ENCODE measurements at regions of chr22 and their contacts with region 1.

Region 1: GRCh38 chr22:27911330-27911729 is 7.7 kb downstream of the PITPNB start:
- DNase-seq: no peak
- ATAC-seq: no peak
- H3K4me3 ChIP-seq: no peak overlapping the region
- H3K27ac ChIP-seq: peak overlapping the region in 2 of 10 donors; percentile 56 to 67
- H3K4me1 ChIP-seq: peaks cover 6 to 62% (median 52%) of the 10 kb centered on the region in 9 donors
- H3K27me3 ChIP-seq: no peaks in the 10 kb centered on the region
- CTCF ChIP-seq: no peak

Region 2: GRCh38 chr22:27896245-27896644 is 15.1 kb before region 1 on chr22:
- intact Hi-C with region 1: loop called in 1 of 10 experiments (anchors 2 kb)
- DNase-seq: peak in 1 of 2 donors; percentile 30
- ATAC-seq: peak in 2 of 8 donors; percentile 36 to 62
- H3K4me3 ChIP-seq: no peak overlapping the region
- H3K27ac ChIP-seq: peak overlapping the region in 2 of 10 donors; percentile 8 to 14
- H3K4me1 ChIP-seq: peaks cover 0 to 42% (median 10%) of the 10 kb centered on the region in 9 donors
- H3K27me3 ChIP-seq: no peaks in the 10 kb centered on the region
- CTCF ChIP-seq: no peak

Region 3: GRCh38 chr22:28002181-28002700 is 90.9 kb after region 1 on chr22:
- intact Hi-C with region 1: no loop called
- DNase-seq: no peak
- ATAC-seq: no peak
- H3K4me3 ChIP-seq: no peak overlapping the region
- H3K27ac ChIP-seq: no peak overlapping the region
- H3K4me1 ChIP-seq: peaks cover 0 to 21% (median 12%) of the 10 kb centered on the region in 9 donors
- H3K27me3 ChIP-seq: no peaks in the 10 kb centered on the region
- CTCF ChIP-seq: no peak

Region 4: DNA sequence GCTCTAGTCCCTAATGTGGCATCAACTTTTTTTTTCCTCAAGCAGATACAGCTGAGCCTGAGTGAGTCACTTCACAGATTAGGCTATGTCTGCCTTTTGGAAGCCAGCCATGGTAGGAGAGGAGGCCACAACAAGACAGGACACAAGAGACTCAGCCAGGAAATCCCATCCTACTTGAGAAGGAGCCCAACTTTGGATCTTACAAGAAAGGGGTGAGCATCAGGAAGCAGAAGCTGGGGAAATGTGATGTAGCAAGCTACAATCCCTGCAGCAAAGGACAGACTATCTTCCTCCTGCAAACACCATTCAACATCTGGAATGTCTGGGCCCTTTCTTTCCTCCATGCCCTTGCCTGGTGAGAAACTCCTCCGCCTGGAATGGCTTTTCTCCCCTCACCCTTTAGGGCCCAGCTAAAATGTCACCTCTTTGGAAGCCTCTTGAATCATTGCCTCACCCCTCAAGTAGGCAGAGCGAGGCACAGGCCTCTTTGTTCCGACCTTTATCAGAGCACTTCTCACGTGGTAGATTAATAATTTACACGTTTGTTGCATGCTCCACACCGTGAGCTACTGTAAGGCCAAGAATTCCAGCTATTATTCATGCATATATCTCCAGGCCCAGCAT is 164.1 kb after region 1 on chr22:
- intact Hi-C with region 1: no loop called
- DNase-seq: peak in 1 of 2 donors; percentile 75
- ATAC-seq: peak; percentile 80 to 90 (median 84)
- H3K4me3 ChIP-seq: no peak overlapping the region
- H3K27ac ChIP-seq: peak overlapping the region; percentile 45 to 84 (median 72)
- H3K4me1 ChIP-seq: peaks cover 3 to 33% (median 17%) of the 10 kb centered on the region in 9 donors
- H3K27me3 ChIP-seq: no peaks in the 10 kb centered on the region
- CTCF ChIP-seq: no peak

Measured in heart right ventricle (tissue), 16 donors.